Naive thymus-derived CD8-positive, alpha-beta T cell (primary cell): ENCODE measurements at regions of chr22 and their contacts with region 1.

Region 1: GRCh38 chr22:41946629-41947423 is at the start of gene CENPM:
- DNase-seq: peak; percentile 71 to 88 (median 78)
- ATAC-seq: peak; percentile 93 to 94
- H3K4me3 Mint-ChIP-seq: peak within 1 kb of the TSS; percentile 85 to 95 (median 91)
- H3K27ac Mint-ChIP-seq: peak within 1 kb of the TSS in 7 of 10 donors; percentile 44 to 86 (median 75)
- H3K4me1 Mint-ChIP-seq: peaks cover 0 to 22% (median 13%) of the 10 kb centered on the region in 4 donors
- H3K27me3 Mint-ChIP-seq: no peaks in the 10 kb centered on the region
- polyA plus RNA-seq, gene CENPM: 2.1 to 7.2 (median 2.3) TPM

Region 2: GRCh38 chr22:41810022-41810421 is 136.8 kb before region 1 on chr22:
- POLR2A ChIA-PET with region 1: interaction called, 10 read pairs
- DNase-seq: peak in 1 of 10 donors; percentile 15
- ATAC-seq: no peak
- H3K4me3 Mint-ChIP-seq: no peak overlapping the region
- H3K27ac Mint-ChIP-seq: peak overlapping the region in 1 of 10 donors; percentile 6
- H3K4me1 Mint-ChIP-seq: peaks cover 4 to 15% (median 10%) of the 10 kb centered on the region in 4 donors
- H3K27me3 Mint-ChIP-seq: no peaks in the 10 kb centered on the region

Region 3: GRCh38 chr22:41888627-41889200 is 58.1 kb before region 1 on chr22:
- POLR2A ChIA-PET with region 1: no interaction called
- DNase-seq: no peak
- ATAC-seq: no peak
- H3K4me3 Mint-ChIP-seq: no peak overlapping the region
- H3K27ac Mint-ChIP-seq: peak overlapping the region in 1 of 10 donors; percentile 11
- H3K4me1 Mint-ChIP-seq: peaks cover 0 to 6% (median 1%) of the 10 kb centered on the region in 4 donors
- H3K27me3 Mint-ChIP-seq: no peaks in the 10 kb centered on the region

Region 4: DNA sequence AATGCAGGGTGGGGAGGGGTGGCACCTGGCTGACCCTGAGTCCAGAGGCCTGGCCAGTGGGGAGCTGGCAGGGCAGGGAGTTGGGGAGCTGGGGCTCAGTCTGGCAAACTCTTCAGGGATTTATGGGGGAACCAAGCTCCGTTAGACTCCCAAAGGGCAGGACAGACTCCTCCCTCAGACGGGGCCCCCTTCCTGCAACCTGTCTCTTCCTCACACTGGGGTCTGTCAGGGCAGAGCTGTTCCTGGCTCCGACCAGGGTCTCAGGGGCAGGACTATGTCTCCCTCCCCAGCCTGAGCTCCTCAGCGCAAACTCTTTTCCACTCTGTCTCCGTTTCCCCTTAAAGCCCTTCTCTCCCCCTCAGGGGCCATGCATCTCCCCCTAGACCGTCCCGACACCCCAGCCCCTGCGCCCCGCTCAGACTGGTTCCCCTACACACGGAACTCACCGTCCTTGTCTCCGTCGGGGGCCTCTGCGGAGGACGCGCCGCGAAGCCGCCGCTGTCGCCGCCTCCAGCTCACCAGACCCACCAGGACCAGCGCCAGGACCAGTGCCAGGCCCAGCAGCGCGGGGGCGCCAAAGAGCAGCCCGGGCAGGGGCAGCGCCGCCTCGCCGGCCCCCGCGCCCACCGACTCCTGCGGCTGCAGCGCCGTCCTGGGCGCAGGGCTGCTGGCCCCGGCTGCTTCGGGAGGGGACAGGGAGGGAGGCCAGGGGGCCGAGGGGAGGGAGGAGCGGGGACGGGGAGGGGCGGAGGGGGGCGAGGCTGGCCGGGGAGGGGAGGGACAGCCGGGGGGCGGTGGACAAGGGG is 21.0 kb before region 1 on chr22:
- POLR2A ChIA-PET with region 1: interaction called, 68 read pairs
- DNase-seq: peak; percentile 63 to 88 (median 74)
- ATAC-seq: peak; percentile 83
- H3K4me3 Mint-ChIP-seq: peak overlapping the region; percentile 69 to 89 (median 81)
- H3K27ac Mint-ChIP-seq: peak overlapping the region in 8 of 10 donors; percentile 44 to 88 (median 67)
- H3K4me1 Mint-ChIP-seq: peaks cover 14 to 43% (median 29%) of the 10 kb centered on the region in 4 donors
- H3K27me3 Mint-ChIP-seq: peaks cover 0 to 3% (median 2%) of the 10 kb centered on the region in 5 donors